Transverse colon (tissue), 4 donors: ENCODE measurements at regions of chr17 and their contacts with region 1.

Region 1: GRCh38 chr17:30477083-30477773 is at the start of gene GOSR1:
- DNase-seq: peak; percentile 95
- H3K4me3 ChIP-seq: peak within 1 kb of the TSS; percentile 66 to 96 (median 86)
- H3K27ac ChIP-seq: peak within 1 kb of the TSS; percentile 85 to 95 (median 92)
- H3K4me1 ChIP-seq: peaks cover 0 to 25% (median 17%) of the 10 kb centered on the region in 4 donors
- H3K27me3 ChIP-seq: peaks cover 4% of the 10 kb centered on the region
- CTCF ChIP-seq: peak; percentile 66 to 83 (median 72)
- EP300 ChIP-seq: no peak
- POLR2A ChIP-seq: peak; percentile 78
- total RNA-seq, gene GOSR1: 27.3 to 56.1 (median 42.1) TPM

Region 2: GRCh38 chr17:30352240-30352814 is 124.9 kb before region 1 on chr17:
- in situ Hi-C with region 1: no loop called
- intact Hi-C with region 1: no loop called
- DNase-seq: no peak
- H3K4me3 ChIP-seq: no peak overlapping the region
- H3K27ac ChIP-seq: no peak overlapping the region
- H3K4me1 ChIP-seq: no peaks in the 10 kb centered on the region
- H3K27me3 ChIP-seq: no peaks in the 10 kb centered on the region
- CTCF ChIP-seq: no peak
- EP300 ChIP-seq: no peak
- POLR2A ChIP-seq: no peak

Region 3: DNA sequence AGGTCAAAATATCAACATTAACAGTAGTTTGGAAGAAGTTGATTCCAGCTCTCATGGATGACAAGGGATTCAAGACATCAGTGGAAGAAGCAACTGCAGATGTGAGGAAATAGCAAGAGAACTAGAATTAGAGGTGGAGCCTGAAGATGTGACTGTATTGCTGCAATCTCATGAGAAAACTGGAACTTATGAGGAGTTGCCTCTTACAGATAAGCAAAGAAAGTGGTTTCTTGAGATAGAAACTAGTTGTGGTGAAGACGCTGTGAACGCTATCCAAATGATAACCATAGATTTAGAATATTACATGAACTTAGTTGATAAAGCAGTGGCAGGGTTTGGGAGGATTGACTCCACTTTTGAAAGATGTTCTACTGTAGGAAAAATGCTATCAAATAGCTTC is 67.8 kb after region 1 on chr17:
- in situ Hi-C with region 1: no loop called
- intact Hi-C with region 1: no loop called
- DNase-seq: no peak
- H3K4me3 ChIP-seq: no peak overlapping the region
- H3K27ac ChIP-seq: no peak overlapping the region
- H3K4me1 ChIP-seq: no peaks in the 10 kb centered on the region
- H3K27me3 ChIP-seq: no peaks in the 10 kb centered on the region
- CTCF ChIP-seq: no peak
- EP300 ChIP-seq: no peak
- POLR2A ChIP-seq: no peak

Region 4: DNA sequence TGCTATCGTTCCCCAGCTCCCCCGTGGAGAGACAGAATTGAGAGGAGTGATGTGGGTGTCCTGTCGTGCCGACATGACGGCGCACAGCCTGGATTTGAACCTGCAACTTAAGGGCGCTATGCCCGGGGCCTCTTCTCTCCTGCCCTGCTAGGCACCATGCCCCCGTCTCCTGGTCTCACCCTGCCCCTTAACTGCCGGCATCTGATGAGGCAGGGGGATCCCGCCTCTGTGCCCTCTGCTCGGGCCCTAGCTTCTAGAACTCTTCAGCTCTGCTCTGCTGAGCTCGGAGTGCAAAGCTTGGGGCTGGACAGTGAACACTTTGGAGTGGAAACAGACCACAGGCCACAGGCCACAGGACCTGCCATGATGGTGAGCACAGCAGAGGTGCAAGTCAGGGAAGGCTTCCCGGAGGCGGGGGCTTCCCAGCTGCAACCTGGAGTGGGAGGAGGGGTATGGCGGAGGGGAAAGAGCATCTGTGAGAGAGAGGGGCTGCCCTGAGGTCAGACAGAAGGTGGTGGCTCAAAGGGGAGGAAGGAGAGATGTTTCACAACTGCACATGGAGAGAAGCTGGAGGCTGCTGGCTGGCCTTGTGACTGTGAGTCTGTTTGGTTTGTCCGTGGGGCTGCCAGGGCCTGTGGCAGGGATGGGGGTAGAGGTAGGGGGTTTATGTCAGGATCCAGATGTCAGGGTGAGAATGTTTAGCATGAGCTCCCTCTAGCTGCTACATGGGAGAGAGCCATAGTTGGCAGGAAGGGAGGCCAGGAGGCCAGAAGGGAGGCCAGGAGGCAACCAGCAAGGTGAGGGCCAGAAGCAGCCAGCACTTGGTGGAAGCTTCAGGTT is 239.5 kb after region 1 on chr17:
- in situ Hi-C with region 1: loop called in 1 of 4 experiments (anchors 25 kb)
- intact Hi-C with region 1: no loop called
- DNase-seq: no peak
- H3K4me3 ChIP-seq: no peak overlapping the region
- H3K27ac ChIP-seq: no peak overlapping the region
- H3K4me1 ChIP-seq: peaks cover 0 to 6% (median 2%) of the 10 kb centered on the region in 4 donors
- H3K27me3 ChIP-seq: no peaks in the 10 kb centered on the region
- CTCF ChIP-seq: no peak
- EP300 ChIP-seq: no peak
- POLR2A ChIP-seq: no peak